Calu3 (cell line): ENCODE measurements at regions of chr2 and their contacts with region 1.

Region 1: DNA sequence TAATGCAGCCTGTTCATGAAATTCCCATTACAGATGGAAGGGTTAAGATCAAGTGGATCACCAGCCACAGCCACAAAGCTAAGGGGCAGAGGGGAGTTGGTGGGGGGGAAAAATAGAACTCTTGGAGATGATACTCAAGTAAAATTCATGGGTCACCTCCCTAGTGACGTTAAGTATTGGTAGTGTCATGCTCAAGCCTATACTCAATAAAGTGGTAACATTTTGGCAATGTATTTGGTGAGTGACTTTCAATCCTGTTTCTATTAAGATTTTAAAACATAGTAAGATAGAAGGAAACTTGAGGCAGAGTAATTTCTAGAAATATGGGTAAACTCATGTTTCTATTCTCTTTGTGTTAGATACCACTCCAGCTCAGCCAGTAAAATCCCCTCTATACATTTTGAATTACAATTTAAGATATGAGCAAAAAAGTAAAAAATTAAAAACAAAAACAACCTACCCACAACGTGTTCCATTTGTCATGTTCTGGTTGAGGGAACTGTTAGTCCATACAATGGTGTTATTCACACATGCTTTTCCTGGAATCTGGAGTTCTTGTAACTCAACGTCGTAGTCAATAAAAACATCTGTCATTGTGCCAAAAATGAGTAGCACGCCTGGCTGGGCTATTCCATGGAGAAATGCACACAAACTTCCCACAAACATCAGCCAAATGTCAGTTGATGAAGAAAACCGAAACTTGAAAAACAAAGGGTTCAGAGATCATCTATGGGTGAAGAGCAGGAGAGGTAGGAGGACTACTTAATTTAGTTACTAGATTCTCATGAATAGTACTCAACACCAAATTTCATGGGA is 18.1 kb downstream of the ABCB11 start:
- DNase-seq: peak; percentile 46
- H3K4me3 Mint-ChIP-seq: peak overlapping the region; percentile 35
- H3K27ac Mint-ChIP-seq: peak overlapping the region; percentile 87
- H3K4me1 Mint-ChIP-seq: peaks cover 82% of the 10 kb centered on the region
- H3K27me3 Mint-ChIP-seq: no peaks in the 10 kb centered on the region
- CTCF ChIP-seq: no peak

Region 2: GRCh38 chr2:168816369-168816768 is 196.7 kb before region 1 on chr2:
- CTCF ChIA-PET with region 1: interaction called, 4 read pairs
- intact Hi-C with region 1: loop called (anchors 1 kb)
- DNase-seq: peak; percentile 65
- H3K4me3 Mint-ChIP-seq: peak overlapping the region; percentile 14
- H3K27ac Mint-ChIP-seq: peak overlapping the region; percentile 78
- H3K4me1 Mint-ChIP-seq: peaks cover 57% of the 10 kb centered on the region
- H3K27me3 Mint-ChIP-seq: no peaks in the 10 kb centered on the region
- CTCF ChIP-seq: no peak

Region 3: DNA sequence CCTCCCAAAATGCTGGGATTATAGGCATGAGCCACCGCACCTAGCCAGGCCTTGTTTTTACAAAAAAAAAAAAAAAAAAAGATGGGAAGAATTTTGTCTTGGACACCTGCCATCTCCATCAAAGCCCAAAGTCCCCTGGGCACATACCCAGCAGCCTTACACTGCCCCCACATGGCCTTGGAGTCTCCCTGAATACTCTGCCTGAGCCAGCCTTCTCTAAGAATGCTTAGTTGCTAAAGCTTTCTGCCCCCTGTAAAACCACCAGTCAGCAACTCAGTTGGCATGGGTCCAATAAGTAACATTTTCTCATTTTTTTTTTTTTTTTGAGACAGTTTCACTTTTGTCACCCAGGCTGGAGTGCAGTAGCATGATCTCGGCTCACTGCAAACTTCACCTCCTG is 163.4 kb before region 1 on chr2:
- CTCF ChIA-PET with region 1: interaction called, 8 read pairs
- intact Hi-C with region 1: loop called (anchors 1 kb)
- DNase-seq: peak; percentile 87
- H3K4me3 Mint-ChIP-seq: no peak overlapping the region
- H3K27ac Mint-ChIP-seq: peak overlapping the region; percentile 14
- H3K4me1 Mint-ChIP-seq: peaks cover 33% of the 10 kb centered on the region
- H3K27me3 Mint-ChIP-seq: no peaks in the 10 kb centered on the region
- CTCF ChIP-seq: peak; percentile 67

Region 4: DNA sequence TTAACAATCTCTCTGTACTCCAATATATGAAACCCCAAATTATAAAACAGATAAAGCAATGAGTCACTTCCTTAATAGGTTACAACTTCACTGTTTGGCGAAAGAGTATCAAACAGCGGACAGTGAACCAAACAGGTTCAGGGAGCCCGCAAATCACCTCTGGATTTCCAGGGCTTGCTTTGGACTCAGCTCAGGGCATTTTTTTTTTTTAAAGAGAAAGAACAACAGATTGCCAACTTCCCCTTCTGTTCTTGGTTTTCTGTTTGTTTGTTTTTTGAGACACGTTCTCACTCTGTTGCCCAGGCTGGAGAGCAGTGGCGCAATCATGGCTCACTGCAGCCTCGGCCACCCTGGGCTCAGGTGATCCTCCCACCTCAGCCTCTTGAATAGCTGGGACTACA is 34.6 kb before region 1 on chr2:
- CTCF ChIA-PET with region 1: interaction called, 4 read pairs
- intact Hi-C with region 1: loop called (anchors 1 kb)
- DNase-seq: peak; percentile 77
- H3K4me3 Mint-ChIP-seq: no peak overlapping the region
- H3K27ac Mint-ChIP-seq: peak overlapping the region; percentile 45
- H3K4me1 Mint-ChIP-seq: peaks cover 42% of the 10 kb centered on the region
- H3K27me3 Mint-ChIP-seq: no peaks in the 10 kb centered on the region
- CTCF ChIP-seq: no peak

Region 5: DNA sequence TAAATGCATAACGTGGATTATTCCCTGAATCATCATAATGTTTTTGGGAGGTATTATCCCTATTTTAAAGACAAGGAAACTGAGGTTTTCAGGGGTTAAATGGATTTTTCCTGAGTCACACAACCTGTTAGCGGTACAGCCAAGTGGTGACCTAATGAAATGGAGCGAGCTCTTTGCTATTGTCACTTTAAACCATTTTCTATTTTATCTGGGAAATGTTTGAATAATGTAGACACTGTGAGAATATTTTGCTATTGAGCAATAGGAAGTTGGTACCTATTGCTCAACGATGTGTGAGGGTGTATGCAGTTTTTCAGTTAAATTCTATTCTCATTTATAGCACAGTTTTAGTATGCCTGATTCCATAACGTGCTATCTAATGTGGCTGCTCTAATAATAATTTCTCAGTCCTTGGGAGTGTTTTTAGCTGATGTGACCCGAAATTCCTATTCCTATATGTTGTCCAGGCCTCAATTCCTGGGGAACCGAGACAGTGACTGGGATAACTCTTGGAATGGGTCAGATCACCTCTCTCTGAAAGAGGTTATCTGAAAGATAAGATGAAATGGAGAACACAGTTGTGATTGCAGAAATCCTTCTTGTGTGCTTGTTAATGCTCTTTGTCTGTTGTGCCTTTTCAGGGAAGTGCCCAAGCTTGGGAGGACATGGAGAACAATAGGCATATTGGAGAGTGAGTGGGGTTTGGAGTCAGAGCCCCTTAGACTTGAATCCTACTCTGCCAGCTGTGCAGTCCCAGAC is 20.2 kb before region 1 on chr2:
- CTCF ChIA-PET with region 1: interaction called, 12 read pairs
- intact Hi-C with region 1: loop called (anchors 2 kb)
- DNase-seq: no peak
- H3K4me3 Mint-ChIP-seq: no peak overlapping the region
- H3K27ac Mint-ChIP-seq: peak overlapping the region; percentile 34
- H3K4me1 Mint-ChIP-seq: peaks cover 38% of the 10 kb centered on the region
- H3K27me3 Mint-ChIP-seq: no peaks in the 10 kb centered on the region
- CTCF ChIP-seq: no peak

Region 6: GRCh38 chr2:169038338-169038757 is 25.3 kb after region 1 on chr2:
- CTCF ChIA-PET with region 1: interaction called, 44 read pairs
- intact Hi-C with region 1: loop called (anchors 1 kb)
- DNase-seq: peak; percentile 54
- H3K4me3 Mint-ChIP-seq: no peak overlapping the region
- H3K27ac Mint-ChIP-seq: peak overlapping the region; percentile 87
- H3K4me1 Mint-ChIP-seq: peaks cover 63% of the 10 kb centered on the region
- H3K27me3 Mint-ChIP-seq: no peaks in the 10 kb centered on the region
- CTCF ChIP-seq: no peak

Region 7: DNA sequence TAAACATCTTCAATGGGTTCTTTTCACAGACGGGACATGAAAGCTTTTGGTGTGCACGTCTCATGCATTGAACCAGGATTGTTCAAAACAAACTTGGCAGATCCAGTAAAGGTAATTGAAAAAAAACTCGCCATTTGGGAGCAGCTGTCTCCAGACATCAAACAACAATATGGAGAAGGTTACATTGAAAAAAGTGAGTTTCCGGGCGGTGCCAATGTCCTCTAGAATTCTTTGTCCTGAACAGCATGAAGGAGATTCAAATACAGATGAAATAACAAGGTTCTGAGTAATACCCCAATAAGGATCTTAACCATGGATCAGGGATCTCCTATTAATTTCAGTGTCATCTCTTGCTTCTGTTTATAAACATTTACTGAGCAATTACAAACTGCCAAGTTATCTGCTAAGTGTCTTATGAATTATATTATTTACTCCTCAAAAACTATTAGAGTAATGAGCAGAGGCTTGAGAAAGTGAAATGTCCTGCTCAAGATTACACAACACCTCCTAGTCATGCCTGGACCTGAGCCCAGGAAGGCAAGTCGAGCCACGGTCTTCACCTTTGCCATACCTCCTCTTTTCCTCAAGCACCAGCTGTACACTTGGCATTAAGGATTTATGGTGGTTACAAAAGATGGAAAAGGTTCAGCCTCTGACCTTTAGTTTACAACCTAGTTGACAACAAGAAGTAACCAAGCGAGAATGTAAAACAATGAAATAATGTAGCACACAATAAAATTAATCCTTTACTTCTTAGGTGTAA is 78.9 kb after region 1 on chr2:
- CTCF ChIA-PET with region 1: no interaction called
- intact Hi-C with region 1: loop called (anchors 2 kb)
- DNase-seq: peak; percentile 65
- H3K4me3 Mint-ChIP-seq: no peak overlapping the region
- H3K27ac Mint-ChIP-seq: peak overlapping the region; percentile 58
- H3K4me1 Mint-ChIP-seq: peaks cover 59% of the 10 kb centered on the region
- H3K27me3 Mint-ChIP-seq: no peaks in the 10 kb centered on the region
- CTCF ChIP-seq: no peak